ENCODE measurements at regions of chr10 and their contacts with region 1.

Region 1: GRCh38 chr10:131997366-131998049 is 15.8 kb upstream of the BNIP3 start:
- DNase-seq: peak; percentile 75
- H3K4me3 ChIP-seq: peak overlapping the region in 1 of 3 experiments; percentile 13
- H3K27ac ChIP-seq: no peak overlapping the region
- H3K4me1 ChIP-seq: peaks cover 7% of the 10 kb centered on the region
- H3K27me3 ChIP-seq: peaks cover 0 to 2% of the 10 kb centered on the region in 2 experiments
- CTCF ChIP-seq: no peak
- POLR2A ChIP-seq: no peak

Region 2: DNA sequence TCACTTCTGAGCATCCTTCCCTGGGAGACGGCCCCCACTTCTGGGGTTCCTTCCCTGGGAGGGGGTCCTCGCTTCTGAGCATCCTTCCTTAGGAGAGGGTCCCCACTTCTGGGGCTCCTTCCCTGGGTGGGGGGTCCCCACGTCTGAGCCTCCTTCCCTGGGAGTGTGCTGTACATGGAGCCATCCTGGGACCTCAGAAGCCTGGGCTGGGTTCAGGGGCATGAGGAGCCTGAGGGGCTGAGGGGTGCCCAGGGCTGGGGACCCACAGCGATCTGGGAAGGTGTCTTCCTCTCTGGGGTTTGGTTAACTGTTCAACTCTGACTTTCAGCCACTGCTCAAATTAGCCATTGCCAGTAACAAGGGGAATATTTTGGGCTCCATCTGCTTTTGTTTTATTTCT is 20.3 kb after region 1 on chr10:
- CTCF ChIA-PET with region 1: interaction called, 51 read pairs
- POLR2A ChIA-PET with region 1: no interaction called
- dilution Hi-C with region 1: no loop called
- intact Hi-C with region 1: loop called (anchors 2 kb)
- DNase-seq: no peak
- H3K4me3 ChIP-seq: no peak overlapping the region
- H3K27ac ChIP-seq: no peak overlapping the region
- H3K4me1 ChIP-seq: no peaks in the 10 kb centered on the region
- H3K27me3 ChIP-seq: peaks cover 2 to 3% of the 10 kb centered on the region in 2 experiments
- CTCF ChIP-seq: no peak
- POLR2A ChIP-seq: no peak